ENCODE measurements at regions of chr10 and their contacts with region 1.

Region 1: DNA sequence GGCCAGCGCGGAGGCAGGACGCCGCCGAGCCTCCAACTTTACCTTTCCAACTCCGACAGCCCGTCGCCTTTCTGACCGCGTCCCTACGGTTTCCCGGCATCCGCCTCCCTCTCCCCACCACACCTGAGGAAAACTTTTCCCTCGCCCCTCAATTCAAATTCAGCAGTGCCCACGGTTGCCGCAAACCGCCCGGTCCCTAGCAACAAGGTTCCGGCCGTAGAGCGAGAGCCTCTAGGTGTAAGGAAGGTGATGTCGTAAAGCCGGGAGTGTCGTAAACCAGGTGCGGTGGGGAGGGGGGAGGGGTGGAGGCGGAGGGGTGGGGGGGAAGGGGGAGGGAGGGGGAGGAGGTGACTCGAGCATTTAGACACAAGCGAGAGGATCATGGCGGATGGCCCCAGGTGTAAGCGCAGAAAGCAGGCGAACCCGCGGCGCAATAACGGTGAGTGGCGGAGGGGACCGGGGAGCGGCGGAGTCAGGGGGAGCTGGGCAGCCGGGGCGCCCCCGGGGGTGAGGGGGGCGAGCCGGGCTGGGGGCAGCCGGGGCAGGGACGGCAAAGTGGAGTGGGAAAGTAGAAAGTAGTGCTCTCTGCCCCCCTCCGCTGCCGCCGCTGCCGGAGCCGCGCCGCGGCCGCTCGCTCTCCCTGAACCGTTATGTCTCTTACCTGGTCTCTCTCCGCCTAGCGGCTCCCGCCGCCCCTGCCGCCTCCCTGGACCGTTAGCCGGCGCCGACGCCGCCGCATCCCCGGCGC is at the start of gene ZEB1:
- DNase-seq: peak; percentile 86 to 95 (median 91)
- ATAC-seq: peak; percentile 33 to 78 (median 68)
- H3K4me3 ChIP-seq: peak within 1 kb of the TSS; percentile 66 to 96 (median 90)
- H3K27ac ChIP-seq: peak within 1 kb of the TSS; percentile 91 to 99 (median 98)
- H3K4me1 ChIP-seq: peaks cover 0 to 46% (median 17%) of the 10 kb centered on the region in 12 donors
- H3K27me3 ChIP-seq: no peaks in the 10 kb centered on the region
- CTCF ChIP-seq: peak; percentile 23 to 70 (median 56)
- POLR2A ChIP-seq: no peak
- total RNA-seq, gene ZEB1: 74.0 to 135 (median 95.9) TPM

Region 2: DNA sequence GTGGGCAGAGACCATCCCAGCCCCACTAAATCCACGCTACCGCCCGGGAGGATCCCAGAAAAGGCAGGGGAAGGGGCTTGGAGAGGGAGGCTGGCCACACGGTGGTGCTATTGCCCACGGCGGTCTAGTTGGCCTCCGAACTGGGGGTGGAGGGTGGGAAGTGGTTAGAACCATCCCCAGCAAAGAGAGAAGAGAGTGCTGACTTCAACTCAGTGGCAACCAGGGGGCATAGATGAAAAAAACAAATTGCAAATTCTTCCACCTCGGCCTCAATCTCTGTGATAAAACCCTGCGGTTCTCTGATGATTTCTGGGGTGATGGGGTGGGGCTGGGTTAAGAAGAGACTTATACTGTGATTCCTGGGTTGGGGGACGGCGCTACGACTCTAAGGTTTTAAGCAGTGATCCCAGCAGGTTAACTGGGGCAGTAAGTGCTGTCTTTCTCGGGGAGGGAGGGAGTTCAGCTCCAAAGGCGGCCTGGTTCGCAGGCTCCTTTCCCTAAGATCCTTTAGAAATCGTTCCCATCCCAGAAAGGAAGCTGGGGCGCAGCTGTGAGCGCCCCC is 535.0 kb before region 1 on chr10:
- intact Hi-C with region 1: loop called in 9 of 10 experiments (anchors 2 to 10 kb)
- DNase-seq: peak; percentile 88 to 93 (median 90)
- ATAC-seq: peak; percentile 80 to 86 (median 80)
- H3K4me3 ChIP-seq: peak overlapping the region; percentile 61 to 89 (median 76)
- H3K27ac ChIP-seq: peak overlapping the region; percentile 91 to 99 (median 98)
- H3K4me1 ChIP-seq: peaks cover 0 to 46% (median 18%) of the 10 kb centered on the region in 12 donors
- H3K27me3 ChIP-seq: no peaks in the 10 kb centered on the region
- CTCF ChIP-seq: peak; percentile 75 to 89 (median 86)
- POLR2A ChIP-seq: no peak

Region 3: GRCh38 chr10:31083765-31084184 is 235.3 kb before region 1 on chr10:
- intact Hi-C with region 1: loop called in 2 of 10 experiments (anchors 5 to 10 kb)
- DNase-seq: peak in 2 of 5 donors; percentile 35 to 55
- ATAC-seq: peak in 3 of 4 donors; percentile 58 to 73 (median 69)
- H3K4me3 ChIP-seq: no peak overlapping the region
- H3K27ac ChIP-seq: no peak overlapping the region
- H3K4me1 ChIP-seq: peaks cover 0 to 6% (median 0%) of the 10 kb centered on the region in 12 donors
- H3K27me3 ChIP-seq: no peaks in the 10 kb centered on the region
- CTCF ChIP-seq: peak; percentile 21 to 63 (median 46)
- POLR2A ChIP-seq: no peak

Region 4: GRCh38 chr10:31157123-31158010 is 161.7 kb before region 1 on chr10:
- intact Hi-C with region 1: loop called in 1 of 10 experiments (anchors 5 kb)
- DNase-seq: peak; percentile 82 to 87 (median 86)
- ATAC-seq: peak; percentile 77 to 93 (median 90)
- H3K4me3 ChIP-seq: peak overlapping the region in 3 of 12 donors; percentile 0 to 12 (median 6)
- H3K27ac ChIP-seq: peak overlapping the region; percentile 12 to 83 (median 76)
- H3K4me1 ChIP-seq: peaks cover 3 to 36% (median 29%) of the 10 kb centered on the region in 12 donors
- H3K27me3 ChIP-seq: no peaks in the 10 kb centered on the region
- CTCF ChIP-seq: no peak
- POLR2A ChIP-seq: no peak

Region 5: DNA sequence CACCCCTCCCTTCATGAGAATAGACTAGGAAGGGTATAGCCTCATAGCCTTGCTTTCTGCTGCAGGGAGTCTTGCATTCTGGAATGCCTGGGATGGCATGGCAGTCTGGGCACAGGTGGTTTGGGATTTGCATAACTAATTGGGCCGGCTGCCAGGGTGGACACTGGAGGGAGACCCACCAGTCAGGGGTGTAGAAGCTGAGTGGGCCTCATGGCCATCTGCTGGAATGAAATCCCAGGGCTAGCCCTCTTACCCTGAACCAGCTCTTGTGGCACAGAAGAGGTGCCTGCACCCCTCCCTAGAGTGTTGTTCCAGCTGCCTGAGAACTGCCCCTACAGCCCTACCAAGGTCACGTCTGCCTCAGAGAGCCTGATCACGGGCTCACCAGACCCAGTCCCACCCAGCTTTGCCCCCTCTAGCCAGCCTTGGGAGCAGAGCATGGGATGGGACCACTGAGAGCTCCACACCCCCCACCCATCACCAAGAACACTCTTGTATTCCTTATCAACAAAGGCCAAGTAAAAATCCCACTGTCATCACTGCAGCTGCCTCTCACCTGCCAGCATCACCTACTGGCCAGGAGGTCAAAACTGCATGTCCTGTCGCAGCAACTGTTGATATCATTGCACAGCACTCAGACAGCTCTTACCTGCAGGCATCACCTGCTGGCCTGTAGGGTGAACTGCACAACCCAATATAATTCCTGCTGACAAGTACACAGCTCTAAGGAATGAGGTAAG is 148.9 kb after region 1 on chr10:
- intact Hi-C with region 1: loop called in 2 of 10 experiments (anchors 10 kb)
- DNase-seq: peak in 3 of 5 donors; percentile 16 to 32 (median 26)
- ATAC-seq: peak; percentile 55 to 78 (median 68)
- H3K4me3 ChIP-seq: no peak overlapping the region
- H3K27ac ChIP-seq: no peak overlapping the region
- H3K4me1 ChIP-seq: peaks cover 0 to 9% (median 0%) of the 10 kb centered on the region in 12 donors
- H3K27me3 ChIP-seq: no peaks in the 10 kb centered on the region
- CTCF ChIP-seq: peak in 11 of 12 donors; percentile 40 to 62 (median 48)
- POLR2A ChIP-seq: no peak

Region 6: DNA sequence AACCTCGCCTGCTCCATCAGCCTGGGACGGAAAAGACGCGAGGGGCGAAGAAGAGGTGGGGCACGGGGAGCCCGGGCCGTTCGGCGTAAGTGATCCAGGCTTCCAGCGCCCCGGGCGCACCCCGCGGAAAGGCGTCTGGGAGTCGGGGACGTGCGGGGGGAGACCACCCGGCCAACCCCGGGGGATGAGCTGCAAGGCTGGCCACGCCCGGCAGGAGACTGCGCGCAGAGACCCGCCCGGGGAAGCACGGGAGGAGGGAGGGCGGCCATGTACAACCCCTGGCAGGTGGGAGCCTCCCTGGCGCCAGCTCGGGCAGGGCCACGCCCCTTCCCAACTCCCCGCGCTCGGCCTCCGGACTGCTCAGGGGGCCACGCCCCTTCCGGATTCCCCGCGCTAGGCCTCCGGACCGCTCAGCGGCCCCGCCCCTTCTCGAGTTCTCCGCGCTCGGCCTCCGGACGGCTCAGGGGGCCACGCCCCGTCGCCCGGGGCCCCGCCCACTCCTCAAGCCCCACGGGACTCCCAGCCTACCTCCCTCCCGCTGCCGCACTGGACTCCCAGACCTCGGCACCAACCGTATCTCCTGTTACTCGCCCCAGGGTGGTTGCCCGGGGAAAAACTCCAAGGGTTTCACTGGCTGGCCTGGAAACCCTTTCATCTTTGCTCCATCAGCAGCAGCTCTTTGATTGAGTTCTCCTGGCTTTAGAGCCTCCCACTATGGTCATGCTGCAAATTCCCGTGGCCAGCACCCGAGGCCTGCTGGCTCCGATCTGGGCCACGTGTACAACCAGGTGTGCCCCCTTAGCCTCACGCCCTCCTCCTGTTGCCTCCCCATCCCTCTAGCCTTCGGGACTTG is 284.4 kb after region 1 on chr10:
- intact Hi-C with region 1: loop called in 6 of 10 experiments (anchors 2 to 10 kb)
- DNase-seq: peak; percentile 97 to 98 (median 97)
- ATAC-seq: peak; percentile 93 to 97 (median 96)
- H3K4me3 ChIP-seq: peak overlapping the region; percentile 42 to 80 (median 66)
- H3K27ac ChIP-seq: peak overlapping the region; percentile 79 to 95 (median 90)
- H3K4me1 ChIP-seq: peaks cover 0 to 36% (median 15%) of the 10 kb centered on the region in 12 donors
- H3K27me3 ChIP-seq: no peaks in the 10 kb centered on the region
- CTCF ChIP-seq: peak in 6 of 12 donors; percentile 7 to 18 (median 11)
- POLR2A ChIP-seq: peak in 1 of 2 donors; percentile 64

Region 7: DNA sequence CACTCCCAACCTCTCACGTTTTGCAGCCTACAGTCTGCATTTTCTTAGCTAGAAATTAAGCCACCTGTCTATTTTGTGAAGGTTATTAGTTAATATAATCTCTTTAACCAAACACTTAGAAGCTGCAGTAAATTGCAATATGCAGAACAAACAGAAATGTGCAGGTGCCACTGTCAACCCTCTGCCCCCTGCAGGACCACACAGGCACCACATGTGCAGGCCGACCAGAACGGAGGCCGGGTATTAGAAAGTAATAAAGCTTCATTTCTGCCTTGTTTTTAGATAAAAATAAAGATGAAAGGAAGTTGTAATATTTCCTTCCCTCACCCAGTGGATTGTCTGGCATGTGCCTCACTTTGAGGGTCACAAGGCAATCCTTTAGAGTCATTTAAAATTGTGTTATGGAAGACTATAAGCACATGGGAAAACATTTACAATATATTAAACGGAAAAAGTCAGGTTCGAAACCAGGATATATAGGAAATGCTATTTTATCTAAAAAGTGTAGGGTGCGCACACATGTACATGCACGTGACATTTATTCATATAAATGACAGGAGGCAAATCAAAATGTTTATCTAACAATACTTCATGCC is 451.4 kb after region 1 on chr10:
- intact Hi-C with region 1: loop called in 2 of 10 experiments (anchors 5 to 10 kb)
- DNase-seq: peak in 2 of 5 donors; percentile 45 to 57
- ATAC-seq: peak in 3 of 4 donors; percentile 49 to 81 (median 62)
- H3K4me3 ChIP-seq: no peak overlapping the region
- H3K27ac ChIP-seq: peak overlapping the region in 2 of 12 donors; percentile 21 to 39
- H3K4me1 ChIP-seq: peaks cover 0 to 14% (median 2%) of the 10 kb centered on the region in 12 donors
- H3K27me3 ChIP-seq: no peaks in the 10 kb centered on the region
- CTCF ChIP-seq: peak; percentile 70 to 89 (median 81)
- POLR2A ChIP-seq: no peak

Measured in heart left ventricle (tissue), 16 donors.